ENCODE measurements at regions of chr2 and their contacts with region 1.

Region 1: DNA sequence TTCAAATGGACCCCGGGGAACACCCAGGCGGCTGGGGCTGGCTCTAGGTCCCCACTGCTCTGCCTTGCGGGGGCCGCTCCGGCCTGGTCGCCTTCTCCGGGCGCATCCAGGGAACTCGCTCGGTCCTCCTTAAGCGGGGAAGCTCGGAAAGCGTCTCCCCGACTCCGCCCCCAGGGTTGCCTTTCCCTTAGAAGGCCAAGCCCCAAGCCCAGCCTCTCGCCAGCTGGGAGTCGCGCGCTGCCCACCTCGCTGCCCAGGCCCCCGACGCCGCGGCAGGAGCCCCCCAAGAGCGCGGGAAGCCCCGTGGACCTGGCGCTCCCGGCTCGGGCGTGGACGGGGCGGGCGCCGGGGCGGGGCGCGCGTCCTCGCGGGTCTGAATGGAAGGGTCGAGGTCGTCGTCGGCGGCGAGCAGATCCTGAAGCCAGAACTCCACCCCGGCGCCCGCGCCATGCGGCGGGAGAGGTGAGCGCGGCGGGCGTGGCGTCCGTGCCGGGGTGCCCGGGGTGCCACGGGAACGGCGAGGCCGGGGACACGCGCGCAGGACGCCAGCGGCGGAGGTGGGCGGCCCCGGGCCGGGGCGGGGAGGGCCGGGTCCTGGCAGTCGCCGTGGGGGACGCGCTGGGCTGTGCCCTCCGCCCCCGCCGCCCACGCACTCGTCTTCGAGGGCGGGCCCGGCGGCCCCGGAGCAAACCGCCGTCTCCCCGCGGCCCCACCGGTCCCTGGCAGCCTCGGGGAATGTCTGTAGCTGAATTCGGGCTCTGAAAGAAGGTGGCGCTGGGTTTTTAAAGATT is at the start of gene BOK:
- DNase-seq: peak; percentile 74
- total RNA-seq, gene BOK: 26.9 and 36.3 TPM in 2 replicates

Region 2: DNA sequence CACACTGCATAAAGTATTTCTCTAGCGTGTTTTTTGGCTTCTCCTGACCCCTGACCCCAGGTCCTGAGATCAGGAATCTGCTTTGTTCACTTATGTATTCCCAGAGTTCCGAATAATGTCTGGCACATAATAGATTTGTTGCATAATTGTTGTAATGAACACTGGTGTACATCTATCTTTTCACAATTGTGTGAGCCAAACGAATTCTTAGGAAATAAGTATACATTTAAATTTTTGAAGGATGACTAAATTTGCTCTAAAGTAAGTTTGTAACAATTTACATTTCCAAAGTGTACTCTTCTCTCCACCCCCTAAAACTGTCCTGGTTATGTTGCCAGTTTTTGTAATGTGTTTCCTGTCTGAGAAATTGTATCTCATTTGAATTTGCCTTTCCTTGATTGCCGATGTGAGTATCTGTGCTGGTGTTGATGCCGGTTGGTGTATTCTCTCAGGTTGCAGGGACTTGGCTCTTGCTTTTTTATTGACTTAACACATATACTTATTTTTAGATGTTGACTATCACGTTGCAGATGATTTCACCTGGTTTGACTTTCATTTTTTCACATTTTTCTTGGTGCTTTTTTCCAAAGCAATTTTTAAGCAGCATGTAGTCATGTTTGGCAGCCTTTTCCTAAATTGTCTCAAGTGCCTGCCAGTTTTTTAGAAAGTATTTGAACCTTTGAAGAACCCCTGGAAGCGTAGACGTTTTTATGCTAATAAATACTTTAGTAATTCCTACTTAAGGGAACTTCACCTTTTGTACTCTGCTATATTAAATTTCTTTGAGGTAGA is 218.7 kb before region 1 on chr2:
- in situ Hi-C with region 1: no loop called
- DNase-seq: no peak

Region 3: GRCh38 chr2:241454837-241455485 is 103.8 kb before region 1 on chr2:
- in situ Hi-C with region 1: no loop called
- DNase-seq: no peak

Region 4: DNA sequence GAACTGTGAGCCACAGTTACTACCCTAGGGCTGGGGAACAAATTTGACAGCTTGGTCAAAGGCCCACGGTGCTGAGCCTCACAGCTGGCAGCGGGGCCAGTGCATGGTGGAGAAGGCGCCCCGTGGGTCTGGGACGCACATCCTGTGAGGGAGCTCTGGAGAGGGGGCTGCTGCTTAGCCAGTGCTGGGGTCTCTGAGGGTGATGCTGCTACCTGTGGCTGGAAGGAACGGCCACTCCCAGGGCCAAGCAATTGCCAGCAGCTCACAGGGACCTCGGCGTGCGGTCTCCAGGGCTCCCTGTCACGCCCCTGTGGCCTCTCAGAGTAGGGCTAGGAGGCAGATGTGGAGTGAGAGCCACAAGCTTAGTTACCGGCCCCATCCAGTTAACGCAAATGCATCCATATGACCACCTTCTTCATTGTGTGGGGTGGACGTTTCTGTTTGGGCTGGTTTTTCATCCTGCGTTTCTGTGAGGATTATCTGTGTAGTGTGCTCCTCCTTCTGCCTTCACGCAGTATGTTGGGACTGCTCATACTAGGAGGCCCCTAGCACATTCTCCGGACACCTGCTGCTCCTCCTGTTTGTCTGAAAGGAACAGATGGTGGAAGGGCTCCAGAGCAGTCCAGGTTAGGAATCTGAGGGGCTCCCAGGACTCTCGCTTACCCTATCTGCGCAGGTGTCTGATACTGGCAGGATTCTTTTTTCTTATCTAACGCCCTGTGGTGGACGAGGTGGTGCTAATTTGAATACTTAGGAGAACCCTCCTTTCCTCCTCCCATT is 76.4 kb before region 1 on chr2:
- in situ Hi-C with region 1: loop called (anchors 5 kb)
- DNase-seq: peak; percentile 83

Region 5: DNA sequence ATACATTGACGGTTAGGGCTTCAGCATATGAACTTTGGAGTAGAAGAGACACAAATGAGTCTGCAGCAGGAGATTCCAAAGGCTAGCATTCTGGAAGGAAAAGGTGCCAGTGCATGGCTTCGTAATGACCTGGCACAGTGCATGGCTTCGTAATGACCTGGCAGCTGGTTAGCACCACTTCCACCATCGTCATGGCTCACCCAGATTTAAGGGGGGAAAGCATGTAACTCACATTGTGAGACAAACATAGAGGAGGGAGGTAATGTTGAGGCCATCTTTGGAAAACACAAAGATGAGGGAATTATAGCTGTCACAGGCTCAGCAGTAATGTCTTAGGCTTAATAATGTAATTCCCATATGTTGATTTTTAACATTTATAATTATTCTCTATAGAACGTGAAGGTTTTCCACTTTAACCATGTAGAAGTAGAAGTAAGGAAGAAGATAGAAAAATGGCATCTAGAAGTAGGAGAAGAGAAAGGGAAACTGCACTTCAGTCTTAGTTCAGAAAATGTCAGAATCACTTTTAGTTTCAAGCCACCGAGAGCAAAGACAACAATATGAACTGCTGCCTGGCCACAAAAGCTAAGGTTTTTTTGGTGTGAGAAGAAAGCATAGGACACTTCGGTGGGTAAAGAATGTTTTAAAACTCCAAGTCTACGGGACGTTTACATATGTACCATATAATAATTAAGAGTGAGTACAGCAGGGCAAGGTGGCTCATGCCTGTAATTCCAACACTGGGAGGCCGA is 43.6 kb before region 1 on chr2:
- in situ Hi-C with region 1: loop called (anchors 5 kb)
- DNase-seq: no peak

Measured in G401 (cell line).